ENCODE measurements at regions of chr1 and their contacts with region 1.

Region 1: DNA sequence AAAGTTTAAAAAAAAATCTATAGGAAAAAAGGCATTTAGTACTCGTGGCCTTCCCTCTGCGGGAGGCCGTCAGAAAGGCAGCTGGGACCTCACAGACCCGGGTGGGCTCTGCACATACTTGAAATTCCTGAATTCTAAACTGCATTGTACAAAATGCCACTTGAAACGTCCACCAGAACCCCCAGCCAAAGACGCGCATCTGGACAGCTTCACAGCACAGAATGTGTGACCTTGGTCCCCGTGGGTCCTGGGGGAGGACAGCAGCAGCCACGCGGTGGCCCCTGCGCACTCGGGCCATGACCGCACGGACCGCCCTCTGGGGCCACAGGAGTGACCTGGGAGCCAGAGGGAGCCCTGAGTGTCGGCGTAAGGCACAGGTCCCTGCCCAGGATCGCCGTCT is 20.6 kb upstream of the MRPS14 start:
- DNase-seq: no peak
- CTCF ChIP-seq: no peak

Region 2: DNA sequence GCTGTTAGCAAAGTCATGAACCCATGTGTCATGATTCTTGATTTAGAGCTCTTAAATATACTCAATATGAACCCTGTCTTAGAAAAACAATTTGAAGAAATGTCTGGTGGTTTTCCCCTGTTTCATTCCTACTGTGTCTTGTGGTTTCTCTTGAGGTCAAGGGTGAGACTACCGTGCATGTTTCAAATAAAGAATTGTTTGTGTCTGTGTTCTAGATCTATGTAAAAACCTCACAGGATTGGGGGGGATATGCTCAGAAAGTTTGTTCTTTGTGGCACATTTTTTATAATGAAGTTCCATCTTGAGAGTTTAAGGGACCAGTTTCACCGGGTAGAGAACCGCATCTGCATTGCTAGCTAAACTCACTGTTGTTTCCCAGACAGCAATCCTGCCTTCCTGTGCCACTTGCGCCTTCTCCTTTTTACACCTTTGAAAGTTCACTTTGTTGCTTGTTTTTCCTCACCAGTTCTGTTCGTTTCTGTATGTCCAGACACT is 75.0 kb before region 1 on chr1:
- in situ Hi-C with region 1: no loop called
- DNase-seq: peak; percentile 48
- CTCF ChIP-seq: no peak

Region 3: GRCh38 chr1:175129997-175130648 is 86.3 kb after region 1 on chr1:
- in situ Hi-C with region 1: loop called (anchors 10 kb)
- DNase-seq: no peak
- CTCF ChIP-seq: no peak

Region 4: GRCh38 chr1:175317309-175317708 is 273.5 kb after region 1 on chr1:
- in situ Hi-C with region 1: no loop called
- DNase-seq: no peak
- CTCF ChIP-seq: peak; percentile 43

Region 5: GRCh38 chr1:175338387-175339135 is 294.7 kb after region 1 on chr1:
- in situ Hi-C with region 1: loop called (anchors 25 kb)
- DNase-seq: peak; percentile 33
- CTCF ChIP-seq: peak; percentile 65

Region 6: DNA sequence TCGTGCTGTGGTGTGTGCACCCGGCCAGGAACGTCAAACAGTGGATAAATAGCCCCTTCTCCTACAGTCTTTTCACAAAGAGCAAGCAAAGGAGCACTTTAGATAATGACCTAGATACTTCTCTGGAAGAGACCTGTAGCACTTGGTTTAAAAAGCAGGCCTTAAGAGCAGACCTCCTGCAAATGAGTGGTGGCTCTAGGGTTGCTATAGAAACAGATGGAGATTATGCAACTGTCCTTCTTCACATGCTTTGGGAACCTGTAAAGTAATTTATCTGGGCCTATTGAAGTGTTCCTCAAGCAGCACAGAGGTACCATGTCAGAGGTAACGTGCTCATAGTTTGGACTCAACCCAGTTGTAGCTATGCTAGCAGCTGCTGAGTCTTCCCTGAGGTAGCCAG is 356.9 kb after region 1 on chr1:
- in situ Hi-C with region 1: no loop called
- DNase-seq: no peak
- CTCF ChIP-seq: no peak

Measured in GM13977 (cell line).